ENCODE measurements at regions of chr2 and their contacts with region 1.

Region 1: DNA sequence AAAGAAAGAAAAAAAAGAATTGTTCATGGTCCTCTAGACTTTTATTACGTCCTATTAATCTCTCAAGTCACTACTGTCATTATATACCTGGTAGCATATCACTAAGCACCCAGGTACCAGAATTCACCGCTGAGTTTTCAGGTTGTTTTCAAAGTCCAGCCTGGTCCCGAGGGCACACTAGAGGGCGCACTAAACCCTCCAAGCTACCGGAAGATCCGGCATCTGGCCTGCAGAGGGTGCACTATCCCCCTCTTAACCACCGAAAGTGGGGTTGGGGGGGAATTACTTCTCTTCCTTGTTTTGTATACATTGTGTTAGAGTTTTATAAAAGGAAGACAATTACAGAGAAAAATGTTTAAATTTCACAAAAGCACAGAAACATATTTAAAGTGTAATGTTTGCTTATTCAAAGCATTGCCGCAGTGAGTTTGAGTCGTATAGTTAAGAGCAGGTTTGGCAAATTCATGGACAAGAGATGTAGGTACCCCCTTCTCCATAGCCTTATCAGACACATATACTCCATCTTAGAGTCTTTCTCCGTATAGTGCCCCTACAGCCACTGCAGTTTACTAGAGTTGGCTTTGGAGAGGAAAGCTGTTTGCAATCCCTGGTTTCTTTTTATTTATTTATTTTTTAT is 19.2 kb downstream of the MOGAT1 start:
- DNase-seq: peak; percentile 34 to 56
- ATAC-seq: peak; percentile 91 to 94
- H3K4me3 ChIP-seq: no peak overlapping the region
- H3K27ac ChIP-seq: no peak overlapping the region
- H3K4me1 ChIP-seq: no peaks in the 10 kb centered on the region
- H3K27me3 ChIP-seq: no peaks in the 10 kb centered on the region
- CTCF ChIP-seq: peak; percentile 64 to 93 (median 90)
- POLR2A ChIP-seq: no peak

Region 2: GRCh38 chr2:222860740-222861410 is 170.2 kb after region 1 on chr2 and contains the start of gene ACSL3:
- in situ Hi-C with region 1: no loop called
- intact Hi-C with region 1: loop called (anchors 1 kb)
- DNase-seq: peak; percentile 95 to 96
- ATAC-seq: peak; percentile 86 to 89
- H3K4me3 ChIP-seq: peak within 1 kb of the TSS; percentile 68 to 96 (median 81)
- H3K27ac ChIP-seq: peak within 1 kb of the TSS; percentile 86 to 98 (median 90)
- H3K4me1 ChIP-seq: peaks cover 45 to 51% of the 10 kb centered on the region in 2 donors
- H3K27me3 ChIP-seq: no peaks in the 10 kb centered on the region
- CTCF ChIP-seq: peak in 3 of 5 experiments; percentile 15 to 43 (median 32)
- POLR2A ChIP-seq: peak; percentile 96 to 99
- total RNA-seq, gene ACSL3: 34.7 to 56.8 (median 38.2) TPM

Region 3: GRCh38 chr2:222903234-222904220 is 212.8 kb after region 1 on chr2:
- in situ Hi-C with region 1: loop called in 1 of 4 experiments (anchors 10 kb)
- intact Hi-C with region 1: loop called (anchors 5 kb)
- DNase-seq: no peak
- ATAC-seq: peak; percentile 58 to 70
- H3K4me3 ChIP-seq: no peak overlapping the region
- H3K27ac ChIP-seq: peak overlapping the region in 2 of 4 donors; percentile 32 to 42
- H3K4me1 ChIP-seq: peaks cover 44% of the 10 kb centered on the region in 2 donors
- H3K27me3 ChIP-seq: no peaks in the 10 kb centered on the region
- CTCF ChIP-seq: peak; percentile 52 to 75 (median 66)
- POLR2A ChIP-seq: no peak

Region 4: DNA sequence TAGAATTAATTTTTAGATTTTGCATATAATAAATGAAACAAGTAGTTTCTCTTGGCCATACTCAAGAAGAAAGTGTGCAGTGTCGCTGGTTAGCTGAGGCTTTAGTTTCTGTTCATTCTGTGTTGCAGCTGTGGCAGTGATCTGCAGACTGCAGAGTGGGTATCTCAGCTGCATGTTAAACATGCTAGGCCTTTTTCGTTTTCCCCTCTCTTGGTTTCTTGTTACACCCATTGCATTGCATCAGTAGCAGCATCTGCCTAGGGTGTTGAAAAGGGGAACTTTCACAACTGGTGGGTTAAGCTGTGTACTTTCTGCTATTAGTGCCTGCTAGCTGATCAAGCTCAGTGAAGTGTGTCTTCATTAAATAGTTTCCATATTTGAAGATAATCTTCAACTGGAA is 221.4 kb after region 1 on chr2:
- in situ Hi-C with region 1: loop called in 2 of 4 experiments (anchors 5 to 10 kb)
- intact Hi-C with region 1: no loop called
- DNase-seq: peak in 1 of 2 donors; percentile 26
- ATAC-seq: peak; percentile 57 to 88
- H3K4me3 ChIP-seq: peak overlapping the region in 1 of 4 donors; percentile 11
- H3K27ac ChIP-seq: peak overlapping the region; percentile 70 to 79 (median 74)
- H3K4me1 ChIP-seq: peaks cover 41 to 44% of the 10 kb centered on the region in 2 donors
- H3K27me3 ChIP-seq: no peaks in the 10 kb centered on the region
- CTCF ChIP-seq: no peak
- POLR2A ChIP-seq: no peak

Region 5: GRCh38 chr2:223386189-223386588 is 695.5 kb after region 1 on chr2:
- in situ Hi-C with region 1: no loop called
- intact Hi-C with region 1: loop called (anchors 5 kb)
- DNase-seq: no peak
- ATAC-seq: no peak
- H3K4me3 ChIP-seq: no peak overlapping the region
- H3K27ac ChIP-seq: no peak overlapping the region
- H3K4me1 ChIP-seq: no peaks in the 10 kb centered on the region
- H3K27me3 ChIP-seq: no peaks in the 10 kb centered on the region
- CTCF ChIP-seq: no peak
- POLR2A ChIP-seq: no peak